ENCODE measurements at regions of chr19 and their contacts with region 1.

Region 1: DNA sequence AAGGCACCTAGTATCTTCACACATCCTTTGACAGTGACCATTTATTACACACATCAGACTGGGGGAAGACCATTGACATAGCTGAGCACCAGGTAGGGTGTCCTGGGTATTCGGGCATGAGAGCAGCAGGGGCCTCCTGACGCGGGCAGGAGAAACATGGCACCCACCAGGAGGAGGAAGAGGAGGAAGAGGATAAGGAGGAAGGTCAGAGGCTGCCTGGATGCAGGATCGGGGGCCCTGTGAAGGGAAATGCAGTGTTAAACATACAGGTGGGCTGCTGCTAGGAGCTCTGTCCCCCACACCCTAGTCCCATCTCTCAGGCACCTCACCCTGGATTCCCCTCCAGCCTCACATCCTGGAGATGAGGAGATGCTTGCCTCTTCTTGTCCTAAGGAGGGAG is 5.3 kb downstream of the SYNE4 start:
- DNase-seq: no peak
- H3K4me3 ChIP-seq: no peak overlapping the region
- H3K27ac ChIP-seq: no peak overlapping the region
- H3K4me1 ChIP-seq: no peaks in the 10 kb centered on the region
- H3K27me3 ChIP-seq: no peaks in the 10 kb centered on the region
- CTCF ChIP-seq: no peak

Region 2: GRCh38 chr19:35657904-35658700 is 345.2 kb before region 1 on chr19:
- CTCF ChIA-PET with region 1: no interaction called
- POLR2A ChIA-PET with region 1: interaction called, 15 read pairs
- intact Hi-C with region 1: no loop called
- DNase-seq: no peak
- H3K4me3 ChIP-seq: no peak overlapping the region
- H3K27ac ChIP-seq: no peak overlapping the region
- H3K4me1 ChIP-seq: no peaks in the 10 kb centered on the region
- H3K27me3 ChIP-seq: no peaks in the 10 kb centered on the region
- CTCF ChIP-seq: peak; percentile 48; the same call in 1 of the 2 replicates